ENCODE measurements at regions of chr2 and their contacts with region 1.

Region 1: DNA sequence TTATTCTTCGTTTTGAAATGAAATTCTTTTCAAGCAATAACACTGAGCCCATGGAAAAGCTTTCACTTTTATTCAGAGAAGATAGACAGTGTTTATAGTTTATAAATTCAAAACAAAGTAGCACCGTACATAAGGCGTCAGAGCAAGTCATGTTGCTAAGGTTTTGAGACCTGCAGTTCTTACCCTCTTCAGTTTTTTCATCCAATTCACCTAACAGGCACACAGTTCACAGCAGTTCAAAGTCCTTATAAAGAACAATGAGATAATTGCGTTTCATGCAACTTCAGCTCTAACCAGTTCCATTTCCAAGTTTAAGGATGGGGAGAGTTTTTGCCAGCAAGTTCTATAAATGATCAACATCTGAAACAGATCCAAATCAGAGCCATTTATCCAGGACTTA is 96.7 kb downstream of the ARHGAP15 start:
- DNase-seq: no peak
- H3K4me3 ChIP-seq: no peak overlapping the region
- H3K27ac ChIP-seq: no peak overlapping the region
- H3K4me1 ChIP-seq: no peaks in the 10 kb centered on the region
- CTCF ChIP-seq: no peak

Region 2: GRCh38 chr2:143034292-143035074 is 191.4 kb before region 1 on chr2:
- CTCF ChIA-PET with region 1: no interaction called
- POLR2A ChIA-PET with region 1: no interaction called
- intact Hi-C with region 1: loop called (anchors 2 kb)
- DNase-seq: peak; percentile 86
- H3K4me3 ChIP-seq: no peak overlapping the region
- H3K27ac ChIP-seq: no peak overlapping the region
- H3K4me1 ChIP-seq: no peaks in the 10 kb centered on the region
- CTCF ChIP-seq: peak; percentile 100